CD8-positive, alpha-beta T cell (primary cell): ENCODE measurements at regions of chr1 and their contacts with region 1.

Region 1: GRCh38 chr1:112706908-112707663 is at the start of gene RHOC:
- DNase-seq: peak; percentile 17 to 83 (median 61)
- ATAC-seq: peak; percentile 50
- H3K4me3 ChIP-seq: peak within 1 kb of the TSS; percentile 23 to 62
- H3K4me3 Mint-ChIP-seq: peak within 1 kb of the TSS; percentile 83
- H3K27ac ChIP-seq: peak within 1 kb of the TSS in 1 of 2 experiments; percentile 73
- H3K27ac Mint-ChIP-seq: no peak within 1 kb of the TSS
- H3K4me1 ChIP-seq: peaks cover 28% of the 10 kb centered on the region
- H3K4me1 Mint-ChIP-seq: peaks cover 34% of the 10 kb centered on the region
- H3K27me3 ChIP-seq: no peaks in the 10 kb centered on the region
- H3K27me3 Mint-ChIP-seq: no peaks in the 10 kb centered on the region
- CTCF ChIP-seq: peak; percentile 67
- total RNA-seq, gene RHOC: 7.9 TPM

Region 2: GRCh38 chr1:112501810-112502641 is 205.1 kb before region 1 on chr1:
- CTCF ChIA-PET with region 1: interaction called, 30 read pairs
- POLR2A ChIA-PET with region 1: no interaction called
- intact Hi-C with region 1: loop called (anchors 1 to 2 kb)
- DNase-seq: peak; percentile 18 to 73 (median 57)
- ATAC-seq: peak; percentile 80
- H3K4me3 ChIP-seq: peak overlapping the region; percentile 25 to 45
- H3K4me3 Mint-ChIP-seq: peak overlapping the region; percentile 74
- H3K27ac ChIP-seq: no peak overlapping the region
- H3K27ac Mint-ChIP-seq: no peak overlapping the region
- H3K4me1 ChIP-seq: peaks cover 6% of the 10 kb centered on the region
- H3K4me1 Mint-ChIP-seq: peaks cover 6% of the 10 kb centered on the region
- H3K27me3 ChIP-seq: peaks cover 9 to 16% of the 10 kb centered on the region in 2 experiments
- H3K27me3 Mint-ChIP-seq: peaks cover 72% of the 10 kb centered on the region
- CTCF ChIP-seq: peak; percentile 44

Region 3: DNA sequence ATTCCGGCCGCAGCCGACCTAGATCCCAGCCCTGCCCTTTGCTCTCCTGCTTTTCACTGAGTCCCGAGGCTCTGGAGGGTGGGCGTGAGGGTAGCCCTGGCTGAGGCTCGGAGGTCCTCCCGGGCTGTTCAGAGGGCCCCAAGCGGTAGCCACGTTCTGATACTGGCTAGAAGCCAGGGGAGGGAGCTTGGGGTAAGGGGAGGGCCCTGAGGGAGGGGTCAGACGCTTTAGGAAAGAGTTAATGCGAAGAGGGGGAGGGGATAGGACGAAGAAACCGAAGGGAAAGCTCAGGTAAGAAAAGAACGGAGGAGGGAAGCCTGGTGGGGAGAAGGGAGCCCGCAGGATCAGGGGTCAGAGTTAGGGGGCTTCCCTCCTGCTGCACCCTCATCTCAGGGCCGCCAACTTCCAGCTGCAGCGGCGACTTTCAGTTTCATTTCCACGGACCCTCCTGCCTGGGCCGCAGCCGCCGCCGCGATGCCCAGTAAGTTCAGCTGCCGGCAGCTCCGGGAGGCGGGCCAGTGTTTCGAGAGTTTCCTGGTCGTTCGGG is 32.6 kb before region 1 on chr1 and contains the start of gene MOV10:
- CTCF ChIA-PET with region 1: interaction called, 12 read pairs
- POLR2A ChIA-PET with region 1: interaction called, 19 read pairs
- intact Hi-C with region 1: no loop called
- DNase-seq: peak in 8 of 9 experiments; percentile 34 to 85 (median 62)
- ATAC-seq: peak; percentile 67
- H3K4me3 ChIP-seq: peak within 1 kb of the TSS; percentile 65 to 85
- H3K4me3 Mint-ChIP-seq: peak within 1 kb of the TSS; percentile 93
- H3K27ac ChIP-seq: peak within 1 kb of the TSS; percentile 63 to 75
- H3K27ac Mint-ChIP-seq: peak within 1 kb of the TSS; percentile 94
- H3K4me1 ChIP-seq: peaks cover 24% of the 10 kb centered on the region
- H3K4me1 Mint-ChIP-seq: peaks cover 46% of the 10 kb centered on the region
- H3K27me3 ChIP-seq: no peaks in the 10 kb centered on the region
- H3K27me3 Mint-ChIP-seq: no peaks in the 10 kb centered on the region
- CTCF ChIP-seq: no peak
- total RNA-seq, gene MOV10: 92.4 to 94.7 TPM

Region 4: GRCh38 chr1:112692681-112693080 is 14.4 kb before region 1 on chr1:
- CTCF ChIA-PET with region 1: interaction called, 20 read pairs
- POLR2A ChIA-PET with region 1: interaction called, 3 read pairs
- intact Hi-C with region 1: loop called in 1 of 2 experiments (anchors 1 kb)
- DNase-seq: peak in 1 of 9 experiments; percentile 23
- ATAC-seq: no peak
- H3K4me3 ChIP-seq: no peak overlapping the region
- H3K4me3 Mint-ChIP-seq: no peak overlapping the region
- H3K27ac ChIP-seq: no peak overlapping the region
- H3K27ac Mint-ChIP-seq: no peak overlapping the region
- H3K4me1 ChIP-seq: no peaks in the 10 kb centered on the region
- H3K4me1 Mint-ChIP-seq: no peaks in the 10 kb centered on the region
- H3K27me3 ChIP-seq: no peaks in the 10 kb centered on the region
- H3K27me3 Mint-ChIP-seq: no peaks in the 10 kb centered on the region
- CTCF ChIP-seq: no peak

Region 5: GRCh38 chr1:112762541-112763517 is 55.7 kb after region 1 on chr1:
- CTCF ChIA-PET with region 1: no interaction called
- POLR2A ChIA-PET with region 1: no interaction called
- intact Hi-C with region 1: no loop called
- DNase-seq: no peak
- ATAC-seq: no peak
- H3K4me3 ChIP-seq: no peak overlapping the region
- H3K4me3 Mint-ChIP-seq: no peak overlapping the region
- H3K27ac ChIP-seq: no peak overlapping the region
- H3K27ac Mint-ChIP-seq: no peak overlapping the region
- H3K4me1 ChIP-seq: no peaks in the 10 kb centered on the region
- H3K4me1 Mint-ChIP-seq: no peaks in the 10 kb centered on the region
- H3K27me3 ChIP-seq: no peaks in the 10 kb centered on the region
- H3K27me3 Mint-ChIP-seq: peaks cover 26% of the 10 kb centered on the region
- CTCF ChIP-seq: no peak

Region 6: DNA sequence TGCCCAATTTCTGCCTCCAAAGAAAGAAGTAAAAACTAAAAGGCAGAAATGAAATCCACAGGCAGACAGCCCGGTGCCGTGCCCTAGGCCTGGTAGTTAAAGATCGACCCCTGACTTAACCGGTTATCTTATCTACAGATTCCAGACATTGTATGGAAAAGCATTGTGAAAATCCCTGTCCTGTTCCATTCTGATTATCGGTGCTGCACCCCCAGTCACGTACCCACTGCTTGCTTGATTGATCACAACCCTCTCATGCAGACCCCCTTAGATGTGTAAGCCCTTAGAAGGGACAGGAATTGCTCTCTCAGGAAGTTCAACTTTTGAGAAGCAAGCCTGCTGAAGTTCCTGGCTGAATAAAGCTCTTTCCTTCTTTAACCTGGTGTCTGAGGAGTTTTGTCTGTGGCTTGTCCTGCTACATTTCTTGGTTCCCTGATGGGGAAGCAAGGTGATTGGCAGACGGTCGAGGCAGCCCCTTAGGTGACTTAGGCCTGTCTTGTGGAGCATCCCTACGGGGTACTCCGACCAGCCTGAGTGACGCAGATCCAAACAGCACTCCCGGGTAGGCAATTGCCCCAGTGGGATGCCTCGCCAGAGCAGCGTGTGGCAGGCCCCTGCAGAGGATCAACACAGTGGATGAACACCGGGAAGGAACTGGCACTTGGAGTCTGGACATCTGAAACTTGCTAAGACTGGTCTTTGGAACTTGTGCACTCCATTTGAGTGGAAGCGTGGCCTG is 119.3 kb after region 1 on chr1:
- CTCF ChIA-PET with region 1: no interaction called
- POLR2A ChIA-PET with region 1: no interaction called
- intact Hi-C with region 1: no loop called
- DNase-seq: no peak
- ATAC-seq: no peak
- H3K4me3 ChIP-seq: no peak overlapping the region
- H3K4me3 Mint-ChIP-seq: no peak overlapping the region
- H3K27ac ChIP-seq: no peak overlapping the region
- H3K27ac Mint-ChIP-seq: no peak overlapping the region
- H3K4me1 ChIP-seq: no peaks in the 10 kb centered on the region
- H3K4me1 Mint-ChIP-seq: no peaks in the 10 kb centered on the region
- H3K27me3 ChIP-seq: no peaks in the 10 kb centered on the region
- H3K27me3 Mint-ChIP-seq: peaks cover 8% of the 10 kb centered on the region
- CTCF ChIP-seq: no peak

Region 7: GRCh38 chr1:113340038-113340437 is 633.0 kb after region 1 on chr1:
- CTCF ChIA-PET with region 1: no interaction called
- POLR2A ChIA-PET with region 1: no interaction called
- intact Hi-C with region 1: no loop called
- DNase-seq: no peak
- ATAC-seq: no peak
- H3K4me3 ChIP-seq: no peak overlapping the region
- H3K4me3 Mint-ChIP-seq: no peak overlapping the region
- H3K27ac ChIP-seq: no peak overlapping the region
- H3K27ac Mint-ChIP-seq: no peak overlapping the region
- H3K4me1 ChIP-seq: no peaks in the 10 kb centered on the region
- H3K4me1 Mint-ChIP-seq: no peaks in the 10 kb centered on the region
- H3K27me3 ChIP-seq: peaks cover 0 to 2% of the 10 kb centered on the region in 2 experiments
- H3K27me3 Mint-ChIP-seq: peaks cover 16% of the 10 kb centered on the region
- CTCF ChIP-seq: no peak